CD8-positive, alpha-beta T cell (primary cell): ENCODE measurements at regions of chr4 and their contacts with region 1.

Region 1: DNA sequence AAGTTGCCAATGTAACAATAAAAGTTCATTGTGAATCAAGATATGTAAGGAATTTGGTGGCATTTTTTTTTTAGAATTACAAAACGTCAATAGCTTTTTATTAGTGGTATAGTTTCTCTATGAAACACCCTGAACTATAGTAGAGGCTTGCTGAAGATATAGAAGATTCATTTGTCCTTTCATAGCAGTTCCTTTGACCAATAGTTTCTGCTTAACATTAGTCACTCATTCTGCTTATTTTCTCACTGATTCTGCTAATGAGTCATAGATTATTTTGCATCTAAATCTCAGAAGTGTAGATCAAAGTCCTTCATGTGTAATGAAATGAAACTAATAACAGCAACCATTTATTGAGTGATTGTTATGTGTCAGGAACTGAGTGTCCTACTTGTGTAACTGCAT is 205.0 kb upstream of the TET2 start:
- DNase-seq: no peak
- ATAC-seq: no peak
- H3K4me3 ChIP-seq: no peak overlapping the region
- H3K4me3 Mint-ChIP-seq: no peak overlapping the region
- H3K27ac ChIP-seq: no peak overlapping the region
- H3K27ac Mint-ChIP-seq: no peak overlapping the region
- H3K4me1 ChIP-seq: peaks cover 42% of the 10 kb centered on the region
- H3K4me1 Mint-ChIP-seq: peaks cover 36% of the 10 kb centered on the region
- H3K27me3 ChIP-seq: no peaks in the 10 kb centered on the region
- H3K27me3 Mint-ChIP-seq: no peaks in the 10 kb centered on the region
- CTCF ChIP-seq: no peak

Region 2: GRCh38 chr4:104989371-104989770 is 47.7 kb after region 1 on chr4:
- CTCF ChIA-PET with region 1: no interaction called
- POLR2A ChIA-PET with region 1: no interaction called
- intact Hi-C with region 1: no loop called
- DNase-seq: no peak
- ATAC-seq: no peak
- H3K4me3 ChIP-seq: no peak overlapping the region
- H3K4me3 Mint-ChIP-seq: no peak overlapping the region
- H3K27ac ChIP-seq: no peak overlapping the region
- H3K27ac Mint-ChIP-seq: no peak overlapping the region
- H3K4me1 ChIP-seq: no peaks in the 10 kb centered on the region
- H3K4me1 Mint-ChIP-seq: no peaks in the 10 kb centered on the region
- H3K27me3 ChIP-seq: no peaks in the 10 kb centered on the region
- H3K27me3 Mint-ChIP-seq: no peaks in the 10 kb centered on the region
- CTCF ChIP-seq: no peak

Region 3: GRCh38 chr4:105061136-105061696 is 119.6 kb after region 1 on chr4:
- CTCF ChIA-PET with region 1: no interaction called
- POLR2A ChIA-PET with region 1: no interaction called
- intact Hi-C with region 1: loop called in 1 of 2 experiments (anchors 10 kb)
- DNase-seq: peak in 6 of 9 experiments; percentile 5 to 51 (median 26)
- ATAC-seq: peak; percentile 56
- H3K4me3 ChIP-seq: no peak overlapping the region
- H3K4me3 Mint-ChIP-seq: peak overlapping the region; percentile 2
- H3K27ac ChIP-seq: no peak overlapping the region
- H3K27ac Mint-ChIP-seq: peak overlapping the region; percentile 55
- H3K4me1 ChIP-seq: no peaks in the 10 kb centered on the region
- H3K4me1 Mint-ChIP-seq: peaks cover 16% of the 10 kb centered on the region
- H3K27me3 ChIP-seq: no peaks in the 10 kb centered on the region
- H3K27me3 Mint-ChIP-seq: no peaks in the 10 kb centered on the region
- CTCF ChIP-seq: no peak